ENCODE measurements at regions of chr7 and their contacts with region 1.

Region 1: DNA sequence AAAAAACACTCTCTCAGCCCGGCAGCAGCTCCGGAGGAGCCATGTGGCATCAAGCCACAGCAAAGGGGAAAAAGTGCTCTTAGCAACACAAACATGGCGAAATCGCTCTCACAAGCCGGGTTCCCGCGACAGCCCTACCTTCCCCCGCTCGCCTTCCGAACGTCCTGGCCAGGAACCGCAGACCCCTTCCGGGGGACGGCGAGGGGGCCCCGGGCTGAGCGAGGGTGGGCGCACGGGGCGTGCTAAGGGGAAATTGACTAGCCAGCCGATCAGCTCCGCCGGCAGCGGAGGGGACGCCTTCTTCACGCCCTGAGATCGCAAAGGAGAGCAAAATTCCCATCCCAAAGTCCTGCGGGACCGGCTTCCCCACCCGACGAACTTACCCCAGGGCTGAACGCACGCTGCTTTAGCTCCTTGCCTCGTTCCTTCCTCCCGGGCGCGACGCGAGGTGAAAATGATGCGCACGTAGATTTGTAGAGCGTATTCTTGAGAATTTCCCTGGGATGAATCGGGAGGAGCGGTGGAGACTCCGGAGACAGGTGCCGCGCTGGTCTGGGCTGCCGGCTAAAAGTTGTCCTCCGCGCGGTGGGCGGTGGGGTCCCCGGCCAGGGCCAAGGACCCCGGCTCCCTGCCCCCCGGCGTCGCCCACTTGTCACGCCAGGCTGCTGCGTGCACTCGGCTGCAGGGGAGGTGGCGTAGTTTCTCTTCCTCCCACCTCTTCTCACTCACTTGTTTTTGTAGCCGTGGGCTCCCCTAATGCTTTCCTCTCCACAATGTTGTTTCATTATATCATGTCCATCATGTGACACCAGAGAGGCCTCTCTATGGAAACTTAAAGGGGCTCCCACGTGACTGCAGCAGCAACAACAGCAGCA is 220.1 kb upstream of the MKLN1 start:
- DNase-seq: peak; percentile 82
- H3K4me3 Mint-ChIP-seq: peak overlapping the region; percentile 98
- H3K27ac Mint-ChIP-seq: peak overlapping the region; percentile 97
- H3K4me1 Mint-ChIP-seq: peaks cover 57% of the 10 kb centered on the region
- H3K27me3 Mint-ChIP-seq: peaks cover 2% of the 10 kb centered on the region

Region 2: GRCh38 chr7:130440527-130441365 is 666.8 kb before region 1 on chr7 and contains the start of gene CEP41:
- CTCF ChIA-PET with region 1: no interaction called
- intact Hi-C with region 1: loop called (anchors 5 kb)
- DNase-seq: peak; percentile 98
- H3K4me3 Mint-ChIP-seq: peak within 1 kb of the TSS; percentile 98
- H3K27ac Mint-ChIP-seq: peak within 1 kb of the TSS; percentile 98
- H3K4me1 Mint-ChIP-seq: peaks cover 50% of the 10 kb centered on the region
- H3K27me3 Mint-ChIP-seq: no peaks in the 10 kb centered on the region
- total RNA-seq, gene CEP41: 16.0 to 18.2 TPM

Region 3: DNA sequence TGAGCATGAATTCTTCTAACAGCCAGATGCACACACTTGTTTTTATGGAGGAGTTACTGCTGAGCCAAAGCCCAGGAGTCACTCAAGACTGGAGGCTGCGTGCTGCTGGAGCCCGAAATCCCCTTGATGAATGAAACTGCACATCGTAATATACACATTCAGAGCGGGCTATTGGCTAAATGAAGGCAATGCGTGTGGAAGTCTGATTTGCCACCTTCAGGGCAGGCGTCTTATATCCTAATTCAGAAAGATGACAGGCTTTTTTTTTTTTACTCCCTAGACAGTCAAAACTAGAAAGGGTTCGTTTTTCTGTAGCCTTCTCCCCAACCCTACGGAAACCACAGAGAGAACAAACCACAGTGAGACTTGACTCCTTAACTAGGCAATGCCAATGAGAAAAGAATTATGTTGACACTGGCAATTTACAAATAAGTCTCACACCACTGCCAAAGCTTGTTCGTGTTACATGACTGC is 146.4 kb before region 1 on chr7:
- CTCF ChIA-PET with region 1: interaction called, 3 read pairs
- intact Hi-C with region 1: loop called (anchors 1 kb)
- DNase-seq: peak; percentile 92
- H3K4me3 Mint-ChIP-seq: peak overlapping the region; percentile 87
- H3K27ac Mint-ChIP-seq: peak overlapping the region; percentile 99
- H3K4me1 Mint-ChIP-seq: peaks cover 36% of the 10 kb centered on the region
- H3K27me3 Mint-ChIP-seq: no peaks in the 10 kb centered on the region

Region 4: DNA sequence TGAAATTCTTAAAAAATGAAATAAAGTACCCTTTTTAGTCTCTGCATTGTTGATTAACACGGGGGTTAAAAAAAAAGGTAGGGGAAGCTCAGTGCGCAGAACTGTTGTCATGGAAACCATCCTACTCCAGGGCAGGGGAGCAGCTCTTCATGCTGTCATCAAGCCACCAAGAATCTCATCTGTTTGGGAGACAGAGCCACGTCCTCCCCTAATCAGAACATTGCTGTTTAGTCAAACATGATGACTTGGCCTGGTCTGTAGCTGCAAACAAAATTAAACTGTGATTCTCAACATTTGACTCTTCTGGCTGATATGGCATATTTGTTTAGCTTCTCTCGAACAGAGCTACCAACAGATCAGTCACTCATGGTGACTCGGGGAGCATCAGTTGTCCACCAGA is 119.1 kb before region 1 on chr7:
- CTCF ChIA-PET with region 1: no interaction called
- intact Hi-C with region 1: no loop called
- DNase-seq: peak; percentile 57
- H3K4me3 Mint-ChIP-seq: no peak overlapping the region
- H3K27ac Mint-ChIP-seq: peak overlapping the region; percentile 83
- H3K4me1 Mint-ChIP-seq: peaks cover 78% of the 10 kb centered on the region
- H3K27me3 Mint-ChIP-seq: no peaks in the 10 kb centered on the region

Region 5: GRCh38 chr7:131068604-131069021 is 39.0 kb before region 1 on chr7:
- CTCF ChIA-PET with region 1: interaction called, 10 read pairs
- intact Hi-C with region 1: loop called (anchors 1 kb)
- DNase-seq: no peak
- H3K4me3 Mint-ChIP-seq: no peak overlapping the region
- H3K27ac Mint-ChIP-seq: peak overlapping the region; percentile 86
- H3K4me1 Mint-ChIP-seq: peaks cover 73% of the 10 kb centered on the region
- H3K27me3 Mint-ChIP-seq: no peaks in the 10 kb centered on the region

Region 6: GRCh38 chr7:131302876-131303707 is 195.5 kb after region 1 on chr7:
- CTCF ChIA-PET with region 1: no interaction called
- intact Hi-C with region 1: loop called (anchors 2 kb)
- DNase-seq: peak; percentile 53
- H3K4me3 Mint-ChIP-seq: no peak overlapping the region
- H3K27ac Mint-ChIP-seq: no peak overlapping the region
- H3K4me1 Mint-ChIP-seq: peaks cover 5% of the 10 kb centered on the region
- H3K27me3 Mint-ChIP-seq: no peaks in the 10 kb centered on the region

Region 7: DNA sequence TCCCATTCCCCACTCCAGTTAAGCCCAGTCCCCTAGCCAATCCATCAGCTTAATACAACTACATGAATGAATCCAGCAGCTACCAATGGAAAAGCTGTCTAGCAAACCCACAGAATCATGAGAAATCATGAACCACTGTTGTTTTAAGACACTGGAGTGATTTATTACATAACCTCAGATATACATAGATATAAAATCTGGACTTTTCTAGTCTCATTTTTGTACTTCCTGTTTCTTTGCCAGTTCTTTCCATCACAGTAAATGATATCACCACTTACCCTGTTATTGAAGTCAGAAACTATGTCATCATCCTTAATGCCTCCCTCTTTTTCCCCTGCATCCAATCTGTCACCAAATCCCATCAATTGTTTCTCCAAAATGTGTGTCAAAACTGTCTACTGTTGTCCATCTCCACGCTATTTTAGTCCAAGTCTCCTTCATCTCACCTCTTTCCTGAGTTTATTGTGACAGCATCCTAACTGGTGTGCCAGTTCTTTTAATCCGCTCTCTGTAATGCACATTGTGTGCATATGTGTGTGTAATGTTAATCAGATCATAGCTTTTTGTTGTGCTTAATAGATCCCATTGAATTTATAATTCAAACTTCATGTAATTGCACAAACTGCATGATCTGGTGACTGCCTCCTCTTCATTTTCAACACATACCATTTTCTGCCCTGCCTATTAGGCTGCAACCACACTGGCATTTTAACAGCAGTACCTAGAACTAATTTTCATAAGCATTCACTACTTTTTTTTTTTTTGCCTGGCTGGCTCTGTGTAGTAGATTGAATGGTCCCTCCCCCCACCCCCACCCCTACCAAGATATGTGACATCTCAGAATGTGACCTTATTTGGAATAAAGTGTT is 276.1 kb after region 1 on chr7:
- CTCF ChIA-PET with region 1: interaction called, 4 read pairs
- intact Hi-C with region 1: loop called (anchors 5 kb)
- DNase-seq: no peak
- H3K4me3 Mint-ChIP-seq: no peak overlapping the region
- H3K27ac Mint-ChIP-seq: peak overlapping the region; percentile 10
- H3K4me1 Mint-ChIP-seq: peaks cover 38% of the 10 kb centered on the region
- H3K27me3 Mint-ChIP-seq: no peaks in the 10 kb centered on the region